ENCODE measurements at regions of chr1 and their contacts with region 1.

Region 1: DNA sequence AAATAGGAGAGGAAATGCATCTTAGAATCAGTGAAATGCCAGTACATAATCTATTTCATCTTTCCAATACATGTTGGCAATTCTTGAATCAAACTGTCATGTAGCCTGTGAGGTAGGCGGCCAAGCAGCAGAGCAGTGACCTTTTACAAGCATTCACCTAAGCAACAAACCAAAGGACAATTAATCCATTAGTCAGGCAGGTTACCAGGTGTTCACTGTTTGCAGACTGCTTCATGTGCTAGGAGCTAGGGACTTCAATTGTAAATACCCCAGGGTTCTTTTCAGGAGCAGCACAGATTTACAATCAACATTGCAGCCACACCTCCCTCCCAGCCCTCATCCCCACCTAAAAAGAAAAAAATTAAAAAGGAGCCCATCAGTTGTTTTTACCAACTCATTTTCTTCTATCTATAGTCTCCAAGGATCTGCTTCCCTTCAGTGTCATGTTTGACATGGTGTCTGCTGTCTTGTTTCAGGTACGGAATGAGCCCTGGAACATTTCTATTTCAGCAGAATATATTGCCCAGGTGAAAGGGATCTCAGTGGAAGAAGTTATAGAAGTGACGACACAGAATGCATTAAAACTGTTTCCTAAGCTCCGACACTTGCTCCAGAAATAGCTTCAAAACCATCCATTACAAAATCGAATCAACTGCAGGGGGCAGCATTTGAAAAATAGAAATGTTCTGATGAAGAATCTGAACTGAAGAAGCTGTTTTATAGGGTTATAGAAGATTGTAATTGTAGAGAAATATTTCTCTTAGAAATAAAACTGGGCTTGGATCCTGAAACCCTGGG is 23.0 kb downstream of the TATDN3 start:
- DNase-seq: no peak
- H3K4me3 ChIP-seq: no peak overlapping the region
- H3K27ac ChIP-seq: no peak overlapping the region
- H3K4me1 ChIP-seq: peaks cover 0 to 11% (median 7%) of the 10 kb centered on the region in 4 donors
- H3K27me3 ChIP-seq: no peaks in the 10 kb centered on the region
- CTCF ChIP-seq: peak; percentile 34 to 51 (median 46)
- EP300 ChIP-seq: no peak
- POLR2A ChIP-seq: no peak

Region 2: DNA sequence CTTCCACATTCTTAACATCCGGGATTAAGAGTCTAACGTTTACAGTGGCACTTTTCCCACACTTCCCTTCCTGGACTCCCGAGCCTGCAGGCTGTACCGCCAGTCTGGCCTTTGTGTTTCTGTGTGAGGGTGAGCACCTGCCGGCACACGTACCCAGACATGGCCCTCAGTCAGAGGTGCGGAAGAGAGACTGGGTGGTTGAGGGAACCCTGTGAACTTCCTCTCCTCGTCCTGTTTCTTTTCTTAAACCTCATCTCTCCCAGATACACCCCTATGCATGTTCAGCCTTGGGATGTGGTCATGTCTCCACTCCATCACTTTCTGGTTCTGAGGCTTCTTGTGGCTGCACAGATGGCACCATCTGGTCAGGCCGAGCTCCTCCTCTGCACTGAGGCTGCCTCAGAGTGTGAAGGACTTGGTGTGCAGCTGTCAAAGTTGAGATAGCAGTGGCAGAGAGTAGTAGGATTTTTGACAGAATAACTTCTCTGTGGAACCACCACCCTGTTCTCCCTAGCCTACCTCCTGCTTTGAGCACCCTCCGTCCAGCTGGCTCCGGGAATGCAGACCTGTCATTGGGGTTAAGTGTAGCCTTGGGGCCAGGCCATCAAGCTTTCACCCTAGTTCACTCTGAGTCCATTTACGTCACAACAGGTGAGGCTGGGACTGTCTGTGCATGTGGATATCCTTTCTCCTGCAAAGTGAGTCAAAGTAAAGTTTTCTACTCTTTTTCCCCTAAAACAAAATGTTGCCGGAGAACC is 167.0 kb after region 1 on chr1:
- in situ Hi-C with region 1: loop called in 3 of 4 experiments (anchors 25 kb)
- intact Hi-C with region 1: no loop called
- DNase-seq: no peak
- H3K4me3 ChIP-seq: no peak overlapping the region
- H3K27ac ChIP-seq: no peak overlapping the region
- H3K4me1 ChIP-seq: peaks cover 0 to 11% (median 1%) of the 10 kb centered on the region in 4 donors
- H3K27me3 ChIP-seq: no peaks in the 10 kb centered on the region
- CTCF ChIP-seq: no peak
- EP300 ChIP-seq: no peak
- POLR2A ChIP-seq: no peak

Region 3: DNA sequence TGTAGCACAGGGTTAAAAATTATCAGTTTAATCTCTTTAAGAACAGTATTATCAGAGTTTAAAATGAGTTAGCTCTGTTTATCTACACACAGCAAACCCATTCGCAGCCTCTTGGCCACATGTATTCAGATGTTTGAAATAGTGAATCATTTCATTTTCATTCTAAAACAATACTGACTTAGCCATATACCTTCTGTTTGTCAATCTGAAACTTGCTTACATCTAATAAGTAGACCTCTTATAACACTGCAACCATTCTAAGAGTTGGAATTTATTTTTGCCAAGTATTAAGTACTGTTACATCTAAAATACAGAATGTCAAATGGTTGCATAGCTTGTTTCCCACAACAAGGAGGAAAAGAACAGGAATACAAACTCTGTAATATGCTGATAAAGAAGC is 175.5 kb after region 1 on chr1:
- in situ Hi-C with region 1: loop called (anchors 10 to 25 kb)
- intact Hi-C with region 1: loop called (anchors 10 kb)
- DNase-seq: no peak
- H3K4me3 ChIP-seq: no peak overlapping the region
- H3K27ac ChIP-seq: no peak overlapping the region
- H3K4me1 ChIP-seq: peaks cover 0 to 3% (median 0%) of the 10 kb centered on the region in 4 donors
- H3K27me3 ChIP-seq: no peaks in the 10 kb centered on the region
- CTCF ChIP-seq: no peak
- EP300 ChIP-seq: no peak
- POLR2A ChIP-seq: no peak

Measured in transverse colon (tissue), 4 donors.